ENCODE measurements at regions of chr6 and their contacts with region 1.

Region 1: GRCh38 chr6:44010411-44011349 is 116.6 kb downstream of the MRPL14 start:
- DNase-seq: peak; percentile 52 to 86 (median 79)
- ATAC-seq: peak; percentile 61 to 91 (median 89)
- H3K4me3 ChIP-seq: no peak overlapping the region
- H3K27ac ChIP-seq: peak overlapping the region in 10 of 12 donors; percentile 53 to 92 (median 79)
- H3K4me1 ChIP-seq: peaks cover 0 to 46% (median 15%) of the 10 kb centered on the region in 12 donors
- H3K27me3 ChIP-seq: no peaks in the 10 kb centered on the region
- CTCF ChIP-seq: no peak
- POLR2A ChIP-seq: no peak

Region 2: GRCh38 chr6:43809417-43810291 is 201.0 kb before region 1 on chr6:
- intact Hi-C with region 1: no loop called
- DNase-seq: no peak
- ATAC-seq: peak in 2 of 4 donors; percentile 41 to 68
- H3K4me3 ChIP-seq: no peak overlapping the region
- H3K27ac ChIP-seq: no peak overlapping the region
- H3K4me1 ChIP-seq: peaks cover 0 to 22% (median 2%) of the 10 kb centered on the region in 12 donors
- H3K27me3 ChIP-seq: no peaks in the 10 kb centered on the region
- CTCF ChIP-seq: no peak
- POLR2A ChIP-seq: no peak

Region 3: GRCh38 chr6:44049163-44049988 is 38.7 kb after region 1 on chr6:
- intact Hi-C with region 1: loop called in 4 of 10 experiments (anchors 5 kb)
- DNase-seq: peak in 2 of 5 donors; percentile 31 to 33
- ATAC-seq: peak in 2 of 4 donors; percentile 21 to 30
- H3K4me3 ChIP-seq: no peak overlapping the region
- H3K27ac ChIP-seq: peak overlapping the region in 8 of 12 donors; percentile 6 to 79 (median 42)
- H3K4me1 ChIP-seq: peaks cover 0 to 60% (median 37%) of the 10 kb centered on the region in 12 donors
- H3K27me3 ChIP-seq: no peaks in the 10 kb centered on the region
- CTCF ChIP-seq: no peak
- POLR2A ChIP-seq: no peak

Measured in heart left ventricle (tissue), 16 donors.